Posterior cingulate gyrus (tissue), 11 donors: ENCODE measurements at regions of chr14 and their contacts with region 1.

Region 1: GRCh38 chr14:69818757-69819191 is 21.7 kb upstream of the SLC10A1 start:
- DNase-seq: peak in 4 of 10 donors; percentile 24 to 38 (median 32)

Region 2: DNA sequence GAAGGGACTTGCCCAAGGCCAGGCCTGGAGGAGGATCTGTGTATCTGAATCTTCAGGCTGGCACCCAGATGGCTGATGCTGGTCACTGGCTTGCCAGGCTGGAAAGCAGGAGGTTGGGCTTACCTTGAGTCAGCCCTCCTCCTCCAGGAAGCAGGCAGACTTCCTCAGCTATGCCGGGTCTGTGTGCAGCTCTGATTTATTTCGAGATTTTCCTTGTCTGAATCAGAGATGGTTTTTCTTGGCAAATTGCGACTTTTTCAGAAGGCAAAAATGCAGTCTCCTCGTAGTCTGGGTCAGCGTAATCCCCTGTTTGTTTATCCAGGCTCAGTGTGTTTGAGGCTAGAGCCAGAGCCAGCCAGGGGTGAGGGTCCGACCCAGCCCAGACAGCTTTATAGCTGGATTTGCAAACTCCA is 109.3 kb after region 1 on chr14:
- intact Hi-C with region 1: no loop called
- DNase-seq: no peak

Region 3: GRCh38 chr14:69945912-69946311 is 127.1 kb after region 1 on chr14:
- intact Hi-C with region 1: no loop called
- DNase-seq: no peak

Region 4: GRCh38 chr14:70027785-70028428 is 209.1 kb after region 1 on chr14:
- intact Hi-C with region 1: loop called (anchors 1 kb)
- DNase-seq: peak; percentile 60 to 96 (median 84)

Region 5: DNA sequence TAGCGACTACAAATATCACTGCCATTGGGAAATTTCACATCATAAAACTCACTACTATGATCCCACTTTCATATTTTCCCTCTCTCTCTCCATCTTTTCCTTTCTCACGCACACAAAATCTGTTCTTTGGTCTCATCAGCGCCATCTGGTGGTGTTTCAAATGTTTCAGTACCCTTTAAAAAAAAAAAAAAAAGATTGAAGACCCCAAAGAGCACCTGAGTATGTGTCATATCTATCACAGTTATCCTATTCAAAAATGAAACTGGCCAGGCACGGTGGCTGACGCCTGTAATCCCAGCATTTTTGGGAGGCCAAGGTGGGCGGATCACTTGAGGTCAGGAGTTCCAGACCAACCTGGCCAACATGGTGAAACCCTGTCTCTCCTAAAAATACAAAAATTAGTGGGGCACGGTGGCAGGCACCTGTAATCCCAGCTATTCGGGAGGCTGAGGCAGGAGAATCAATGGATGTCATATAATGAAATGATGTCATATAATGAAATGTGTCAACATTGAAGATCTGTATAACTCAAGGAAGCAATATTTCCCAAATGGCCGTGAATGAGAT is 895.4 kb after region 1 on chr14:
- intact Hi-C with region 1: loop called (anchors 5 kb)
- DNase-seq: peak in 2 of 10 donors; percentile 14 to 25